Activated naive CD4-positive, alpha-beta T cell treated with anti-CD3 and anti-CD28 coated beads, Interleukin-2, amount 10 ng/mL, durations not matched to agents 7 days and 5 days (primary cell): ENCODE measurements at regions of chr6 and their contacts with region 1.

Region 1: GRCh38 chr6:30877419-30878371 is 6.6 kb upstream of the DDR1 start:
- DNase-seq: peak; percentile 84
- H3K4me3 Mint-ChIP-seq: peak overlapping the region; percentile 50
- H3K27ac Mint-ChIP-seq: peak overlapping the region; percentile 79
- H3K4me1 Mint-ChIP-seq: peaks cover 26% of the 10 kb centered on the region
- H3K27me3 Mint-ChIP-seq: peaks cover 23% of the 10 kb centered on the region

Region 2: DNA sequence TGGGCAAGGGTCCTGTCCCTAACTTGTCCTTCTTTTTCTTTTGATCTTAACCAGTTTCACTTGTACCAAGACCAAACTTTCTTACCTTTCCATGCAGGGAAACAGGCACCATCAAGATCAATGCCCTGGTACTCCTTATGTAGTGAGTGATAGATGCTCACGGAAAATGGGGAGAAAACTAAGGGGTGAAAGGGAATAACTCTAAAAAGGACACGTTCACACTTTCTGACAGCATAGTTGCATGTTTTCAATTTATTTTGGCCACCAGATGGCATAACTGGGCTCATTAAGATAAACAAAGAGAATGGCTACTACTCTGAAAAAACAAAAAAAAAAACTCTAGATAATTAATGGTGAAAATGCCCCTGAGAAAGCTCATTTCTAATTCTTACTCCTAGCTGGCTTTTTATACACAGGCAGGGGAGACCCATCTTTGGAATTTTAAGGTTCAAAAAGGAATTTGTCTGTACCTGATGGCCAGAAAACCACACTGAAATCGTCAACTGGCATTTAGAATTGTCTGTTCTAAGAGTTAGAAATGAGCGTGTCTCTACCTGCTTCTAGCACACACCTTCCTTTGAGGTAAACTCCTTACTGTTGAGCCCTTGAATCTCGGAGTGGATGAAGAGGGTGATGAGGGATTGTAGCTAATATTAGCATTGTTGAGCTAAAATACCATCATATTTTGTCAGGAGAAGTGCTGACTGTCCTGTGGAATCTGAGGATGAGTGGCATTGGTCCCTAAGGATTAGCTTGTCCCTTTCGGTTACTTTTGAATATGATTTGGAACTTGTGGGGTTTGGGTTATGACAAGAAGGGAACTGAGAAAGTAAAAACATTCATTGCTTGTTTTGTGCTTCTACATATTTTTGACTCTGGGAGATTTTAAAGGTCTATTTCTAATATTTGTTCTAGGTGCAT is 55.6 kb before region 1 on chr6:
- CTCF ChIA-PET with region 1: interaction called, 174 read pairs
- DNase-seq: no peak
- H3K4me3 Mint-ChIP-seq: no peak overlapping the region
- H3K27ac Mint-ChIP-seq: no peak overlapping the region
- H3K4me1 Mint-ChIP-seq: peaks cover 61% of the 10 kb centered on the region
- H3K27me3 Mint-ChIP-seq: no peaks in the 10 kb centered on the region